ENCODE measurements at regions of chr7 and their contacts with region 1.

Region 1: GRCh38 chr7:137656227-137656849 is 190.4 kb downstream of the DGKI start:
- DNase-seq: peak; percentile 70
- H3K4me3 ChIP-seq: no peak overlapping the region
- H3K27ac ChIP-seq: no peak overlapping the region
- H3K4me1 ChIP-seq: no peaks in the 10 kb centered on the region
- H3K27me3 ChIP-seq: no peaks in the 10 kb centered on the region
- CTCF ChIP-seq: peak; percentile 20 to 72 (median 67)
- POLR2A ChIP-seq: no peak

Region 2: DNA sequence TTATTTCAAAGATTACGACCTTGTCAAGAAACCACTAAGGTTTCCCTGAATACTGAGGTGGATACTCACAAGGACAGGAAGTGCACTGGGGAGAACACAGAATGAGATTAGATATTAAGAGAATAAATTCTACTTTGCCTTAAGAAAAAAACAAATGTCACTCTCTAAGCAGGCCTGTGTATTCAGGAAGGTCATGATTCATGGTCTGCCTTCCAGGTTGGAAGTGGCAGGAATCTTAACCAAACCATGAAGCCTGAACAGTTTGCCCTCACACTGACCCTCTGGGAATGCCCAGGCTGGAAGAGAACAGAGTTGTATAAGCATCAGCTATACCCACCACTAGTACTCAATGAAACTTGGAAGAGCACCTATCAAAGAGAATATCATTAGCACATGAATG is 37.2 kb before region 1 on chr7:
- intact Hi-C with region 1: no loop called
- DNase-seq: no peak
- H3K4me3 ChIP-seq: no peak overlapping the region
- H3K27ac ChIP-seq: no peak overlapping the region
- H3K4me1 ChIP-seq: no peaks in the 10 kb centered on the region
- H3K27me3 ChIP-seq: no peaks in the 10 kb centered on the region
- CTCF ChIP-seq: no peak
- POLR2A ChIP-seq: no peak

Region 3: DNA sequence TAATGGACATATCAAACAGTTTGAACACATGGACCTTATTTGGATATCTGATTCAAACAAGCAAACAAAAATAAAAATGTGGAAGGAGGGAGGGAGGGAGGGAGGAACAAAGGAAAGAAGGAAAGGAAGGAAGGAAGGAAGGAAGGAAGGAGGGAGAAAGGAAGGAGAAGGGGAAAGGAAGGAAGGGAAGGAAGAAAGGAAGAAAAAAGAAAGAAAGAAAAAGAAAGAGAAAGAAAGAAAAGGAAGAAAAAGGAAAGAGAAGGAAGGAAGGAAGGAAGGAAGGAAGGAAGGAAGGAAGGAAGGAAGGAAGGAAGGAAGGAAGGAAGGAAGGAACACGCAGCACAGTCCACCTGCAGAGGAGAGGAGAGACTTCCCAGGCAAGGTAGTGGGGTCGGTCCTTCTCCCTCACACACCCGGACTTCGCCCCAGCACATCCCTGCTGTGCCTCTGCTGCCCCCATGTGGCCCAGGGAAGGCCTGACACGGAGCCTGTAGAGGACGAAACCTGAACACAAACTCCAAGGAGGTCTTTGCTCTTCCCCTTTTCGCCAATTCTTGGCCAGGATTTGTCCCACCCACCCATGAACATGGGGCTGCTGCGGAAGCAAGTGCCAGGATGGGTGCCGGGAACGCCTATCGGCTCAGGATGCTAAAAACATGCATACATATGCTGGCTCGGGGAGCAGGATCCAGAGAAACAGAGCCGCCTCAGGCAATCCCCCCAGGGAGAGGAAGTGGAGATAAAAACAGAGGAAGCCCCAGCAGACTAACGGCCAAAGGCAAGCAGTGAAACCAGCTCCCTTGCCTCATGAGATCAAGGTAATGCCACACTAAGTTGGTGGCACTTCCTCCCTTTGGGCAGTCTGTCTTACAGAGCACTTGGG is 242.7 kb after region 1 on chr7:
- intact Hi-C with region 1: loop called (anchors 1 kb)
- DNase-seq: peak; percentile 65
- H3K4me3 ChIP-seq: no peak overlapping the region
- H3K27ac ChIP-seq: no peak overlapping the region
- H3K4me1 ChIP-seq: no peaks in the 10 kb centered on the region
- H3K27me3 ChIP-seq: no peaks in the 10 kb centered on the region
- CTCF ChIP-seq: peak; percentile 76 to 83 (median 80)
- POLR2A ChIP-seq: no peak

Region 4: DNA sequence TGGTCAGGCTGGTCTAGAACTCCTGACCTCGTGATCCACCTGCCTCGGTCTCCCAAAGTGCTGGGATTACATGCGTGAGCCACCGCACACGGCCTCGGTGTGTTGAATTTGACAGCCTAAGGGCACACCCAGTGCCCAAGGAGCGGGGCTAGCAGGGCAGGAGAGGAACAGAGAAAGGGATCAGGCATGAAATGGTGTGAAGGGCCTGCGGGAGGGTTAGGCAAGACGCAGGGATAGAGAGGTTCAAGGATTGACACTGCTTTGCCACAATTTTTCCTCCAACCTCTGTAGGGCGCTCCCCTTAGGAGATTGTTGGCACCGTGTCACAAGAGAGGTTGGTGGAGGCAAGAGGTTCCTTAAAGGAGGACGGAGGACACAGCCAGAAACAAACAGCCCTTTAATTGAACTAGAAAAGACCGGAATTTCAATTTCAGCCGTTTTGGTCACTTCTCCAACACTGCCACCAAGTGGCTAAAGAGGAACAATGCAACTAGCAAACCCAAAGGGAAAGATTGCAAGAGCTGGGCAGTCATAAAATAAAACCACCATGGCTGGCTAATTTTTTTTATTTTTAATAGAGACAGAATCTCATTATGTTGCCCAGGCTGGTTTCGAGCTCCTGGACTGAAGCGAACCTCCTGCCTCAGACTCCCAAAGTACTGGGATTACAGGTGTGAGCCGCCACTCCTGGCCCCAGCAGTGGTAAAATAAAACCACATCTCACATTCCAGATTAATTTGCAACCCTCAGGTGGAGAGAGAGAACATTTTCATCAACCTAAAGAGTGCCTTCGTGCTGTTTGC is 352.4 kb after region 1 on chr7:
- intact Hi-C with region 1: loop called (anchors 5 kb)
- DNase-seq: peak; percentile 49
- H3K4me3 ChIP-seq: no peak overlapping the region
- H3K27ac ChIP-seq: peak overlapping the region in 1 of 2 donors; percentile 73
- H3K4me1 ChIP-seq: no peaks in the 10 kb centered on the region
- H3K27me3 ChIP-seq: no peaks in the 10 kb centered on the region
- CTCF ChIP-seq: peak; percentile 81 to 97 (median 88)
- POLR2A ChIP-seq: no peak

Region 5: DNA sequence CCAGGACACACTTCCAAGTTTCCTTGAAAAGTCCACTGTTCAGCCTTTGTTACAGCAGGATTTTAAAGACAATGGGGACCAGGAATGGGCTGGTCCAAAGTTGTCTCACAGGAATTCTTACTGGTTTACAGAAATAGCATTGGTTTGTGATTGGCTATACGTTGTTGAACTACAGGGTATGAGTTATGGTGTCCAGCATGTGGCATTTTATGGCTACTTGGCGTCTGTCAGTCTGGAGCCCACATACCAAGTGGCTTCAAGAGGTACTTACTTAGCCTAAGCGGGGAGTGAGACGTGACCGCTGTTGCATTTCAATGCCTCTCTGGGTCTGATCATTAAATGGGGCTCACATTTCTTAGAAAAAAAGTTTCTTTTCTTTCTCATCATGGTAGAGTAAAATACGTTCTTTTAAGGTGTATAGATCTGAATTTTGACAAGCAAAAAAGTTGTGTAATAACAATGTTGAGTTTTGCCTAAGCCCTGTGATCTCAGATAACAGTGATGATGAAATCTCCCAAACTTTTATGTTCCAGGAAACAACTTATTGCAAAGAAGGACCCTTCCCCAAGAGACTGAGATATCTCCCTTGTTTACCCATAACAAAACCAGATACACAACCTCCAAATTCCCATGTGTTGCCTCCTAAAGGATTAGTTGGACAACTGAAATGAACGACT is 703.7 kb after region 1 on chr7:
- intact Hi-C with region 1: no loop called
- DNase-seq: no peak
- H3K4me3 ChIP-seq: no peak overlapping the region
- H3K27ac ChIP-seq: no peak overlapping the region
- H3K4me1 ChIP-seq: no peaks in the 10 kb centered on the region
- H3K27me3 ChIP-seq: no peaks in the 10 kb centered on the region
- CTCF ChIP-seq: no peak
- POLR2A ChIP-seq: no peak